ENCODE measurements at regions of chr19 and their contacts with region 1.

Region 1: GRCh38 chr19:7919610-7920518 is at the start of gene SNAPC2:
- DNase-seq: peak; percentile 98
- ATAC-seq: peak; percentile 72
- H3K4me3 Mint-ChIP-seq: peak within 1 kb of the TSS; percentile 81
- H3K27ac Mint-ChIP-seq: peak within 1 kb of the TSS; percentile 89
- H3K4me1 Mint-ChIP-seq: peaks cover 28% of the 10 kb centered on the region
- H3K27me3 Mint-ChIP-seq: peaks cover 22% of the 10 kb centered on the region
- CTCF ChIP-seq: no peak
- total RNA-seq, gene SNAPC2: 16.0 to 18.2 TPM

Region 2: GRCh38 chr19:7852851-7853769 is 66.8 kb before region 1 on chr19:
- CTCF ChIA-PET with region 1: interaction called, 3 read pairs
- POLR2A ChIA-PET with region 1: no interaction called
- intact Hi-C with region 1: loop called (anchors 10 kb)
- DNase-seq: peak; percentile 85
- ATAC-seq: peak; percentile 97
- H3K4me3 Mint-ChIP-seq: no peak overlapping the region
- H3K27ac Mint-ChIP-seq: no peak overlapping the region
- H3K4me1 Mint-ChIP-seq: peaks cover 5% of the 10 kb centered on the region
- H3K27me3 Mint-ChIP-seq: peaks cover 2% of the 10 kb centered on the region
- CTCF ChIP-seq: peak; percentile 98

Region 3: GRCh38 chr19:7868676-7869452 is 51.0 kb before region 1 on chr19:
- CTCF ChIA-PET with region 1: interaction called, 27 read pairs
- POLR2A ChIA-PET with region 1: interaction called, 3 read pairs
- intact Hi-C with region 1: no loop called
- DNase-seq: peak; percentile 86
- ATAC-seq: peak; percentile 67
- H3K4me3 Mint-ChIP-seq: peak overlapping the region; percentile 75
- H3K27ac Mint-ChIP-seq: peak overlapping the region; percentile 73
- H3K4me1 Mint-ChIP-seq: peaks cover 34% of the 10 kb centered on the region
- H3K27me3 Mint-ChIP-seq: peaks cover 42% of the 10 kb centered on the region
- CTCF ChIP-seq: peak; percentile 96

Region 4: GRCh38 chr19:7903244-7904073 is 16.4 kb before region 1 on chr19 and contains the start of gene MAP2K7:
- CTCF ChIA-PET with region 1: interaction called, 8 read pairs
- POLR2A ChIA-PET with region 1: interaction called, 13 read pairs
- intact Hi-C with region 1: no loop called
- DNase-seq: peak; percentile 100
- ATAC-seq: peak; percentile 92
- H3K4me3 Mint-ChIP-seq: peak within 1 kb of the TSS; percentile 89
- H3K27ac Mint-ChIP-seq: peak within 1 kb of the TSS; percentile 91
- H3K4me1 Mint-ChIP-seq: peaks cover 18% of the 10 kb centered on the region
- H3K27me3 Mint-ChIP-seq: no peaks in the 10 kb centered on the region
- CTCF ChIP-seq: peak; percentile 54
- total RNA-seq, gene MAP2K7: 36.8 to 37.0 TPM

Region 5: DNA sequence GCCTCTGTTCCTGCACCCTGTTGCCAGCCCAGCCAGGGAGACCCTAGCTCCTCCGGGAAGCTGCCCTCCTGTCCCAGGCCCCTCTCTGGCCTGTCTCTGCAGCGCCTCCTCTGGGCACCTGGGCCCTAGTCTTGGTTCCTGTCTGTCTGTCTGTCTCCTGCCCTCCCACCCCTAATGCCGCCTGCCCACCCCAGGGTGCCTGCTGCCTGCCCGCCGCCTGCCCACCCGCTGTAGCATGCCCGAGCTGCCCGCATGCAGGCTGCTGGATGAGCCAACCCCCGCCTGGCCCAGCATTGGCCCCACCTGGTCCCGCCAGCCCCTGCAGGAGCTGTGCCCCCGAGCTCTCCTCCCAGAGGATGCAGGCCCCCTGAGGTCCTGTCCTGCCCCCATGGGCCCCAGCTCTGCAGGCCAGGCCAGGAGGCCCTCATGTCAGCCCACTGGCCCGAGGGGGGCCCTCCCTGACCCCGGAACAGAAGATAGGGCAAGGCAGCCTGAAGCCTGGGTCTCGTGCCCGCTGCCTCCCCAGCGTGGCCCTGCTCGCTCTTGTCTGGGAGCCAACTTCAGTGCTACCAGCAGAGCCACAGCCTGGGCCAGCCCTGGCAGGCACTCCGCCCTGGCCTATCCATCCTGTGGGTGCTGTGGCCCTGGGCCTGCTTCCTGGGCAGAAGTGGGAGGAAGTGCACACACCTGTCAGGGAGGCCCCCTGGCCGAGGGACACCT is 11.0 kb before region 1 on chr19:
- CTCF ChIA-PET with region 1: interaction called, 8 read pairs
- POLR2A ChIA-PET with region 1: interaction called, 13 read pairs
- intact Hi-C with region 1: no loop called
- DNase-seq: no peak
- ATAC-seq: no peak
- H3K4me3 Mint-ChIP-seq: no peak overlapping the region
- H3K27ac Mint-ChIP-seq: no peak overlapping the region
- H3K4me1 Mint-ChIP-seq: peaks cover 15% of the 10 kb centered on the region
- H3K27me3 Mint-ChIP-seq: no peaks in the 10 kb centered on the region
- CTCF ChIP-seq: no peak

Measured in activated CD8-positive, alpha-beta T cell treated with anti-CD3 and anti-CD28 coated beads for 36 hours (primary cell).